GM12878 (cell line): ENCODE measurements at regions of chr3 and their contacts with region 1.

Region 1: DNA sequence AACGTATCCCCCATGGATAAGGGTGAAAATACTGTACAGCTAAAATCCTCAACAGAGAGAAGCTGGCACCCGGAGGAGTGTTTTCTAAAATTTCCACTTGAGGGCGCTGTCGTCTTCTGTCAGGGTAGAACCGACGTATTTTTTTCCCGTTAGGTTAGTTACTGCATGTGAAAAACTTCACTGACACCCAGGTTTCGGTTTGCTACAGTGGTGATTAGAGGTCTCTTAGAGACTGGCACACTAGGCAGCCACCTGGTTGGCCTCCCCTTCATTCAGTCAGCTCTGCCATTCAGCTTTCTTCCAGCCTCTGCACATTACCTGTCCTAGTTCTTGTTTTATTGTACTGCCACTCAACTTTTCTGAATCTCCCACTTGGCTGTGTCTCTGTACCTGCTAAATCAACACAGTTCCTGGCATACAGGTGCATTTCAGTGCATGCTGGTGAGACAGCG is 18.4 kb downstream of the CCK start:
- DNase-seq: no peak
- ATAC-seq: peak; percentile 80
- H3K4me3 ChIP-seq: no peak overlapping the region
- H3K27ac ChIP-seq: no peak overlapping the region
- H3K4me1 ChIP-seq: 0 out of 2 replicates have a peak, but pooled peaks cover 2% of the 10 kb centered on the region
- H3K27me3 ChIP-seq: no peaks in the 10 kb centered on the region
- CTCF ChIP-seq: peak; percentile 58 to 84 (median 77)
- EP300 ChIP-seq: no peak
- POLR2A ChIP-seq: no peak
- RAD21 ChIP-seq: peak; percentile 93

Region 2: GRCh38 chr3:42043027-42043796 is 204.4 kb before region 1 on chr3:
- CTCF ChIA-PET with region 1: no interaction called
- POLR2A ChIA-PET with region 1: no interaction called
- RAD21 ChIA-PET with region 1: no interaction called
- SMC1A ChIA-PET with region 1: no interaction called
- in situ Hi-C with region 1: no loop called
- intact Hi-C with region 1: no loop called
- DNase-seq: no peak
- ATAC-seq: peak; percentile 62
- H3K4me3 ChIP-seq: no peak overlapping the region
- H3K27ac ChIP-seq: no peak overlapping the region
- H3K4me1 ChIP-seq: peaks cover 49% of the 10 kb centered on the region
- H3K27me3 ChIP-seq: no peaks in the 10 kb centered on the region
- CTCF ChIP-seq: no peak
- EP300 ChIP-seq: no peak
- POLR2A ChIP-seq: no peak
- RAD21 ChIP-seq: no peak

Region 3: DNA sequence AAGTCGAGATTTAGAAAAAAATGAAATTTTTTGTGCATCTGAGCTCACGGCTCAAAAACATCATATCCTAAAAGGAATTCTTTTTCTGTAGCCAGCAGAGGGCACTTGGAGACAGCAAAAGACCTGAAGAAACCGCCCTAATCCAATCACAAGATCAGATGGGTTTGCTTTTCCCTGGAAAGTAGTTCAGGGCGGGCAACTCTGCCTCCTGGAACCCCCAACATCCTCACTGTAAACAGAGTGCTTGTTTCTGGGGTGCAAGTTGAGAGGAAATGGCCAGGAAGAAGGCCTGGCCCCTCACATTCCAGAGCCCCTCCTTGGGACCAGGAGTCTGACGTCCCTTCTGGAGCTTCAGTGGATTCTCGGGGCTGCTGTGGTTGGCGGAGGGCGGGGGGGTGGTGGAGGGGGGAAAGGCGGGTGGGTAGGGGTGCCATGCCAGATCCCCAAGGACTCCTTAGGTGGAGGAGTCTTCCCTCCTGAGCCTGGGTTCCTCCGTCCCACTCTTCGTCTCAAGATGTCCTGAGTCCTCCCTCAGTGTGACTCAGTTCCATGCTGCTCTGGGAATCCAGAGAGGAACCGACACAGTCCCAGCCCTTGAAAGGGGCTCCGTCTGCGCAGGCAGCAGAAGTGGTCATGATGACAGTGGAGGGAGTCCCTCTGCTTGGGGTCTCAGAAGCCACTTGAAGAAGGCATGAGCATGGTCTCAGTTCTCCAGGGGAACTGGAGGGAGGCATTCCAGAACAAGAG is 17.5 kb before region 1 on chr3:
- CTCF ChIA-PET with region 1: interaction called, 11 read pairs
- POLR2A ChIA-PET with region 1: no interaction called
- RAD21 ChIA-PET with region 1: interaction called, 5 read pairs
- SMC1A ChIA-PET with region 1: interaction called, 4 read pairs
- in situ Hi-C with region 1: no loop called
- intact Hi-C with region 1: no loop called
- DNase-seq: no peak
- ATAC-seq: no peak
- H3K4me3 ChIP-seq: no peak overlapping the region
- H3K27ac ChIP-seq: no peak overlapping the region
- H3K4me1 ChIP-seq: peaks cover 3% of the 10 kb centered on the region; the same call in 1 of the 2 replicates
- H3K27me3 ChIP-seq: no peaks in the 10 kb centered on the region
- CTCF ChIP-seq: peak in 2 of 3 experiments; percentile 19 to 30; a peak in 3 of 6 replicates
- EP300 ChIP-seq: no peak
- POLR2A ChIP-seq: no peak
- RAD21 ChIP-seq: peak; percentile 53

Region 4: GRCh38 chr3:42270561-42270960 is 23.0 kb after region 1 on chr3:
- CTCF ChIA-PET with region 1: no interaction called
- POLR2A ChIA-PET with region 1: no interaction called
- RAD21 ChIA-PET with region 1: no interaction called
- SMC1A ChIA-PET with region 1: no interaction called
- in situ Hi-C with region 1: no loop called
- intact Hi-C with region 1: no loop called
- DNase-seq: no peak
- ATAC-seq: no peak
- H3K4me3 ChIP-seq: no peak overlapping the region
- H3K27ac ChIP-seq: no peak overlapping the region
- H3K4me1 ChIP-seq: no peaks in the 10 kb centered on the region; the same call in 1 of the 2 replicates
- H3K27me3 ChIP-seq: 0 out of 4 replicates have a peak, but pooled peaks cover 0 to 2% of the 10 kb centered on the region in 2 experiments
- CTCF ChIP-seq: no peak
- EP300 ChIP-seq: no peak
- POLR2A ChIP-seq: no peak
- RAD21 ChIP-seq: no peak

Region 5: DNA sequence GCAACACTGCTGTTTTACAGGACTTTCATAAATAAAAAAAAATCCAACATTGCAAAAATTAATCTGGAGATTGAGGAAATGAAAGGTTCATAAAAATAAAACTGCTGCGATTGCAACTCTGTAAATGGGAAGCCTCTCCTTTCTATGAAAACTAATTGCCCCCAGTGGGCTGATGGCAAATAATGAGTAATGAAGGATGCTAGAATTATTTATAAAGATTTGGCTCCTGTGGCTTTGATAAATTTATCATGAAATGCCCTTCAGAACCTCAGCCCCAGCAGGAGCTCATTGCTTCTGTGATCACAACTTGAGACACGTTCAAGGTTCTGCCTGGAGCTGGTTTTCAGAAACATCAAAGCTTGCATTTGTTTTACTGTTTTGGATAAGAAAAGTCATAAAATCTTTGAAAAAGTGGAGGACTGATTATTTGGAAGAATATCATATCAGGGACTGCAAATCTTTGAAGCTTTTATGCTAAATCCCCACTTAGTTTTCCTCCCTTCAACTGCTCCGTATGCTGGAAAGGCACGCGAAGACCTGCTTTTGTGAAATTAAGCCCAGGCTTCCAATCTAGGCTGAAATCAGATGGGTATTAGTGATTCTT is 187.3 kb after region 1 on chr3:
- CTCF ChIA-PET with region 1: interaction called, 162 read pairs
- POLR2A ChIA-PET with region 1: no interaction called
- RAD21 ChIA-PET with region 1: interaction called, 90 read pairs
- SMC1A ChIA-PET with region 1: interaction called, 110 read pairs
- in situ Hi-C with region 1: loop called (anchors 5 kb)
- intact Hi-C with region 1: no loop called
- DNase-seq: no peak
- ATAC-seq: no peak
- H3K4me3 ChIP-seq: no peak overlapping the region
- H3K27ac ChIP-seq: no peak overlapping the region
- H3K4me1 ChIP-seq: no peaks in the 10 kb centered on the region; the same call in 1 of the 2 replicates
- H3K27me3 ChIP-seq: no peaks in the 10 kb centered on the region
- CTCF ChIP-seq: no peak
- EP300 ChIP-seq: no peak
- POLR2A ChIP-seq: no peak
- RAD21 ChIP-seq: no peak

Region 6: DNA sequence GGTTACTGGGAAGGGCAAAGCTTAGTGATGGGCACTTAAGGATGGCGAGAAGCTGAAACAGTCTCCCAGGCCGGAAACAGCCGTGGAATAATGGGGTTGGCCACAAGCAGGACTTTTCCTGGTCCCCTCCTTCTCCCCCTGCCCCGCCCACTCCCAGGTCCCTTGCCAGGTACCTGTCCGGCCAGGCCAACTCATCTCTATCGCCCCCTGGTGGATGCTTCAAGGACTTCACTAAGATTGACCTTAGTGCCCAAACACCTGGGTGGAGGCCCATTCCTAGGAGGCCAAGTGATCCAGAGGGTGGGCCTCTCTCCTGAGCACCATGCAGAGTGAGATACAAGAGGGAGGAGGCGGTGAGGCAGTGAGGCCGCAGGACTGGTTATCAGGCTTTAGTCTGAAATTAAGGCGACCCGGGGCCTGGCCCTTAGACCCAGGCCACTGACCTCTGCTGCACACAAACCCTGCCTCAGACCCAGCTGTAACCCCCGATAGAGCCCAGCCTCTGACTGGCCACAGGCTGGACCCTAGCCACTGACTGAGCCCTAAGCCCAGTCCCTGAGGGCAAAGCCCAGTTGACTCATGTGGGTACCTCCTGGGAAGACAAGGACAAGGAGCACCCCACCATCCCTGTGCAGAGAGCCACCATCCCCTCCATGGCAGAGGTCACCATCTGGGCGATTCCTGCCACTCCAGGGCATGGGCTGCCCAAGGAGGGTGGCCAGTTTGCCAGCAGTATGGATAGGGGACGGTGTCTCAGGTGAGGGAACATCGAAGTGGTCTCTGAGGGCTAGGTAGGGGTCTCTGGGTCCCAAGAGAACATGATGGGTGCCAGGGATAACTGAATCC is 292.5 kb after region 1 on chr3:
- CTCF ChIA-PET with region 1: interaction called, 32 read pairs
- POLR2A ChIA-PET with region 1: no interaction called
- RAD21 ChIA-PET with region 1: interaction called, 6 read pairs
- SMC1A ChIA-PET with region 1: interaction called, 14 read pairs
- in situ Hi-C with region 1: loop called (anchors 5 kb)
- intact Hi-C with region 1: loop called (anchors 2 kb)
- DNase-seq: no peak
- ATAC-seq: peak; percentile 93
- H3K4me3 ChIP-seq: no peak overlapping the region
- H3K27ac ChIP-seq: no peak overlapping the region
- H3K4me1 ChIP-seq: no peaks in the 10 kb centered on the region
- H3K27me3 ChIP-seq: no peaks in the 10 kb centered on the region
- CTCF ChIP-seq: peak; percentile 65 to 88 (median 79)
- EP300 ChIP-seq: no peak
- POLR2A ChIP-seq: no peak
- RAD21 ChIP-seq: peak; percentile 48; the same call in 1 of the 2 replicates

Region 7: GRCh38 chr3:42556089-42556632 is 308.6 kb after region 1 on chr3:
- CTCF ChIA-PET with region 1: interaction called, 11 read pairs
- POLR2A ChIA-PET with region 1: no interaction called
- RAD21 ChIA-PET with region 1: no interaction called
- SMC1A ChIA-PET with region 1: interaction called, 4 read pairs
- in situ Hi-C with region 1: no loop called
- intact Hi-C with region 1: no loop called
- DNase-seq: no peak
- ATAC-seq: peak; percentile 82
- H3K4me3 ChIP-seq: no peak overlapping the region
- H3K27ac ChIP-seq: no peak overlapping the region
- H3K4me1 ChIP-seq: peaks cover 3% of the 10 kb centered on the region; the same call in 1 of the 2 replicates
- H3K27me3 ChIP-seq: no peaks in the 10 kb centered on the region
- CTCF ChIP-seq: no peak
- EP300 ChIP-seq: no peak
- POLR2A ChIP-seq: no peak
- RAD21 ChIP-seq: no peak